ENCODE measurements at regions of chr4 and their contacts with region 1.

Region 1: DNA sequence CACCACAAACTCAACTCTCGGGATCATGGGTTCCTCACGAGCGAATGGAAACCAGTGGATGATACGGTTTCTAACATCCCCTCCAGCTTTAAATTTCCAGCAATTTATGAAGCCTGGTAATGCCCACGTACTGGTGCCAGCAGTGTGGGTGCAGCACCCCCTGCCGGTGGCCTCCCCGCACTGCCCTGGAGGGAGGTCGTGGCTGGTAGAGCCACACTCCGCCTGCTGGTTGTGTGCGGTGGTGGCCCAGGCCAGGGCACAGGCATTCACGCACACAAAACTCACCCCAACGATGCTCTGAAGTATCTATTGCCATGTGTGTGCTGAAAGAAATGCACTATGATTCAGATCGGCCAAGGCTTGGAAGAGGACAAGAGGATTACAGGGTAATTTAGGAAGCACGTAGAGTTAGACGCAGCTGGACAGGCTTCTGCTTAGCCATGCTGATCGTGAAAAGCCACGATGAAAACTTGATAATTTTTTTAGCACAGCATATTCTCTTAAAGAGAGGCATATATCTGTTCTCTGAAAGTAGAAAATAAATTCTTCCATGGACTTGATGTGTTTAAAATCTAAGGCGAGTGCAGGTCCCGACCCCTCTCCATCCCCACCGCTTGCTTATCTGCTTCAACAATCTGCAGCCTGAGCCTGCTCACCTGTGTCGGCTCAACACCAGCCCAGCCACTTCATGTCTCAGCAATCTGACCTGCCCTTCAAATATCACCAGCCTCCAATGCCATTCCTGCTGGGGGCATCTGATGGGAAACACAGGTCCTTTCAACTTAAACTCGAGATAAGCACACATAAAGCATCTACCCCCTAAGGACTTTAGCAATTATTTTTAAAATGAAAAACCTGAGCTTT is 59.0 kb downstream of the SCD5 start:
- DNase-seq: peak; percentile 85
- H3K4me3 Mint-ChIP-seq: no peak overlapping the region
- H3K27ac Mint-ChIP-seq: no peak overlapping the region
- H3K4me1 Mint-ChIP-seq: no peaks in the 10 kb centered on the region
- H3K27me3 Mint-ChIP-seq: no peaks in the 10 kb centered on the region

Region 2: GRCh38 chr4:82352913-82353366 is 386.6 kb before region 1 on chr4:
- CTCF ChIA-PET with region 1: no interaction called
- intact Hi-C with region 1: no loop called
- DNase-seq: no peak
- H3K4me3 Mint-ChIP-seq: no peak overlapping the region
- H3K27ac Mint-ChIP-seq: peak overlapping the region; percentile 78
- H3K4me1 Mint-ChIP-seq: peaks cover 55% of the 10 kb centered on the region
- H3K27me3 Mint-ChIP-seq: no peaks in the 10 kb centered on the region

Region 3: DNA sequence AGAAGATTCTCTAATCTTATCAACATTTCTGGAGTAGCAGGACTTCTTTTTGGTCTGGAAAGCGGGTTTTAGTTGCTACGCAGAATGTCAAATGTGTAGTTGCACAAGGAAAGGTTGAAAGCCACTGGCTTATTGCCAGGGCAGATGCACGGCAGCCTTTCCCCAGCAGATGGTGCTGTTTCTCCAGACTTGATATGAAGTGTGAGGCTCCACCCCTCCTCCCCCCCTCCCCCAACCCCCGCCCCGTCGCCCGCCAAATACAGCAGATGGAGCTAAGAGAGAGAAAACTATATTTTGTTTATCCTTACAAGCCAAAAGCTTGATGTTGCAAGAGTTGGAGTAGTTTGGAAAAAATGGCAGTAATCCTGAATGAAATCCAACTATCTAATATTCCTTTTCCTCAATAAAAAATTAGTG is 277.1 kb before region 1 on chr4:
- CTCF ChIA-PET with region 1: interaction called, 28 read pairs
- intact Hi-C with region 1: loop called (anchors 1 kb)
- DNase-seq: peak; percentile 93
- H3K4me3 Mint-ChIP-seq: no peak overlapping the region
- H3K27ac Mint-ChIP-seq: no peak overlapping the region
- H3K4me1 Mint-ChIP-seq: peaks cover 2% of the 10 kb centered on the region
- H3K27me3 Mint-ChIP-seq: no peaks in the 10 kb centered on the region

Region 4: GRCh38 chr4:82469791-82470345 is 269.7 kb before region 1 on chr4:
- CTCF ChIA-PET with region 1: interaction called, 21 read pairs
- intact Hi-C with region 1: no loop called
- DNase-seq: no peak
- H3K4me3 Mint-ChIP-seq: no peak overlapping the region
- H3K27ac Mint-ChIP-seq: no peak overlapping the region
- H3K4me1 Mint-ChIP-seq: no peaks in the 10 kb centered on the region
- H3K27me3 Mint-ChIP-seq: no peaks in the 10 kb centered on the region

Region 5: DNA sequence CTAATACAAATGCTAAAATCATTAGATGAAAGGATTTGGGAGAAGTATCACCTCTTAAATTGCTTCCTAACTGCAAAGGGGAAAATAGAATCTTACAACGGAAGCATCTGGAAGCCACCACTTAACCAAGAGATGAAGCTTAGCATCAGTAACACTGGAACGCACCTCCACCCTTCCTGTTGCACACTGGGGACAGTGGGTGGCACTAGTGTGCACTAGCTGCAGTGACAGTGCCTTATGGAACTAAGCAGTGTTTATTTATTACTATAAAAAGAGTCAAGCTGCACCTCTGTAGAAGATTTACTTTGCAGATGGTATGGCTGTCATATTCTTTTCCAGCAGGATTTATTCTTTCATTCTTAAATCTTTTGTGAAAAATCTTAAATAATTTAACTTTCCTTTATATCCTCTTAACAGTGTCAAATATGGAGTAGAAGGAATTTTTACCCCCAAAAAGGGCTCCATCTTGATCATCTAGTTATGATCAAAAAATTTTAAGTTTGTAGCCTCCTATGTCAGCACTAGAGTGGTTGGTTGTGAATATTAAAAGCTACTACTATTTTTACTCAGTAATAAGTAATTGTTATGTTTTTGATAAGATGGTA is 17.6 kb before region 1 on chr4:
- CTCF ChIA-PET with region 1: interaction called, 12 read pairs
- intact Hi-C with region 1: loop called (anchors 2 kb)
- DNase-seq: peak; percentile 33
- H3K4me3 Mint-ChIP-seq: no peak overlapping the region
- H3K27ac Mint-ChIP-seq: no peak overlapping the region
- H3K4me1 Mint-ChIP-seq: no peaks in the 10 kb centered on the region
- H3K27me3 Mint-ChIP-seq: no peaks in the 10 kb centered on the region

Region 6: GRCh38 chr4:82728301-82728700 is 11.2 kb before region 1 on chr4:
- CTCF ChIA-PET with region 1: interaction called, 12 read pairs
- intact Hi-C with region 1: no loop called
- DNase-seq: no peak
- H3K4me3 Mint-ChIP-seq: no peak overlapping the region
- H3K27ac Mint-ChIP-seq: no peak overlapping the region
- H3K4me1 Mint-ChIP-seq: no peaks in the 10 kb centered on the region
- H3K27me3 Mint-ChIP-seq: no peaks in the 10 kb centered on the region